ENCODE measurements at regions of chr7 and their contacts with region 1.

Region 1: DNA sequence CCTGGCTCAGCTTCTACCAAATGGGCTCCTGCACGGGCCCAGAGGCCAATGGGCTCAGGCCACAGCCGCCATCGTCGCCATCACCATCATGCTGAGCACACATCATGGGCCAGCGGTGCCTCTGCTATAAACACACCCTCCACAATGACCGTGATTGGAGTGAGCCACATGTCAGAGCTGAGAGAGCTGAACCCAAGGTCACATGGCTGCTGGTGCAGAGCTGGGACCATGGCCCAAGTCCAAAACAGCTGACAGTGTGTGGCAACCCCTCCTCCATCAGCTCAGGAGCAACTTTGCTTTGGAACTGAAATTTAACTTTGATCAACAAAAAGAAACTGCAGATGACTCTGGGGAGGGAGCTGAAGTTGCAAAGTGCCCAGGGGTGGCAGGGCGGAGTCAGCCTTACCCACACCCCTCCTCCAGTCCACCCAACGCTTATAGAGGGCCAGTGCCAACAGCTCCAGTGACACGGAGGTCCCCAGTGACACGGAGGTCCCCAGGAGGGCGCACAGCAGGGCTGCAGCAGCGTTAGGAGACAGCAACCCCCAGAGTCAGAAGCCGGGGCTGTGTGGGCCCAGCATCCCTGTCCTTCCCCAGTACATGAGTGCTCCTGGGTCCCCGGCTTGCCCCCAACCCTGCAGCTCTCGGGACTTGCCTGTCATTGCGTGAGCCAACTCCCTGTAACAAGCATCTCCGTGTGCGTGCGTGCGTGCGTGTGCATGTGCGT is 249.6 kb downstream of the ELFN1 start:
- H3K4me3 Mint-ChIP-seq: peak overlapping the region; percentile 70
- H3K27ac Mint-ChIP-seq: peak overlapping the region; percentile 87
- H3K4me1 Mint-ChIP-seq: peaks cover 97% of the 10 kb centered on the region
- H3K27me3 Mint-ChIP-seq: no peaks in the 10 kb centered on the region

Region 2: DNA sequence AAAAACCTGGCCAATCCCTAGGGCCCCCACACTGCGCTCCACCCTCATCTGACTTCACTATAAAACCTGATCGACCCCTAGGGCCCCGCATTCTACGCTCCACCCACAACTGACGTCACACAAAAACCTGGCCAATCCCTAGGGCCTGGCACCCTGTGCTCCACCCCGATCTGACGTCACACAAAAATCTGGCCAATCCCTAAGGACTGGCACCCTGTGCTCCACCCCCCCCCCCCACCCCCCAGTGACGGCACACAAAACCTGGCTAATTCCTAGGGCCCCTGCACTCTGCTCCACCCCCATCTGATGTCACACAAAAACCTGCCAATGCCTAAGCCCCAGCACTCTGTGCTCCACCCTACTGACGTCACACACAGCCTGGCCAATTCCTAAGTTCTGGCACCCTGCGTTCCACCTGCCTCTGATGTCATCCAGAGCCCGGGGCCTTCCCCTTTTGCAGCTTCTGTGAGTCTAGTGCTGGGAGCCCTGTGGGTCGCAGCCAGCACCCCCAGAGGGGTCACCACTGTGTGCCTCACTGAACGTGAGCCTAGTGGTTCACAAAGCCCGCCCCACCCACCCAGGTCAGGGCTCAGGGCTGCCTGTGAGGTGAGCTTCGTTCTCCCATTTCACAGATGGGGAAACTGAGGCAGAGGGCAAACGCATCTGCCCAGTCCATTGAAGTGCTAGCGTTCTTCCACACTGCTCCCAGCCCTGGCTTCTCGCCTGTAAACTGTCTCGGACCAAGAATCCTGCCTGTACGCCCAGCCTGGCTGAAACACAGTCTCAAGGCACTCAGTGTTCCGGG is 501.0 kb before region 1 on chr7:
- intact Hi-C with region 1: no loop called
- H3K4me3 Mint-ChIP-seq: peak overlapping the region; percentile 22
- H3K27ac Mint-ChIP-seq: peak overlapping the region; percentile 67
- H3K4me1 Mint-ChIP-seq: peaks cover 23% of the 10 kb centered on the region
- H3K27me3 Mint-ChIP-seq: peaks cover 47% of the 10 kb centered on the region

Region 3: GRCh38 chr7:1940402-1940786 is 20.7 kb after region 1 on chr7:
- intact Hi-C with region 1: loop called (anchors 1 kb)
- H3K4me3 Mint-ChIP-seq: peak overlapping the region; percentile 84
- H3K27ac Mint-ChIP-seq: peak overlapping the region; percentile 98
- H3K4me1 Mint-ChIP-seq: peaks cover 76% of the 10 kb centered on the region
- H3K27me3 Mint-ChIP-seq: no peaks in the 10 kb centered on the region

Region 4: DNA sequence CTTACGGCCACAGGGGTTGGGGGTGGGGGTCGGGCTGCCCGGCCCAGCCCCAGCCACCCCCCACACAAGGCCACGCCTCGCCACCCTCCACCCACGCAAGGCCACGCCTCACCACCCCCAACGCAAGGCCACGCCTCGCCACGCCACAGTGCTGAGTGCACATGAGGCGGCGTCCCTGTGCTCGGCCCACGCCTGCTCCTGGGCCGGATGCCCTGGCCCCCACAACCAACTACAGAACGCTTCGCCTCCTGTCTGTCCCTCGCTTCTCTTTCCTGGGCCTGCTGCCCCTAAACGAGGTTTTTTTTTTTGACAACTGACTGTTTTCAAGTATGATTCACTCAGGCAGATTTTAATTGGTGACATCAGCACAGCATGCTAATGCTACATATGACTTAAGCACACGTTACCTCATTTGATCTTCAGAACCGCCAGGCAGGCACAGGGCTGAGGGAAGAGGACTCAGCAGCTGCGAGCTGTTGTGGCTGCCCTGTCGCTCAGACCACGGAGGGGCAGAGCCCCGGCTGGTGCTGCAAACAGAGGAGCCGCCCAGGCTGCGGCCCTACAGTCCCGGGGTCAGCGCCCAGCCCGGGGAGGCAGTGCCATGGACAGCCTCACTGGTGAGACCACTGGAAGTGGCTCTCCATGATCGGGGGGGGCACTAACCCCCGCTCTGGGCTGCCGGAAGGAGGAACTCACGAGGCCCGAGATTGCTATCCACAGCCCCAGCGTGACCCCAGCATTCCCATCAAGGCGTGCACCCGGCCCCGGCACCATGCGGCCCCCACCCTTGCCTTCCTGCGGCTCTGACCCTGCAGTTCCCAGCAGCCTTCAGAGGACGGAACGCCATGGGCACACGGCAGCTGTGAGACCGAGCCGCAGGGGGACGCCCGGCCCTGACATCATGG is 100.2 kb after region 1 on chr7:
- intact Hi-C with region 1: loop called (anchors 10 kb)
- H3K4me3 Mint-ChIP-seq: peak overlapping the region; percentile 61
- H3K27ac Mint-ChIP-seq: peak overlapping the region; percentile 100
- H3K4me1 Mint-ChIP-seq: peaks cover 81% of the 10 kb centered on the region
- H3K27me3 Mint-ChIP-seq: no peaks in the 10 kb centered on the region

Region 5: GRCh38 chr7:2123360-2123759 is 203.7 kb after region 1 on chr7:
- intact Hi-C with region 1: no loop called
- H3K4me3 Mint-ChIP-seq: no peak overlapping the region
- H3K27ac Mint-ChIP-seq: no peak overlapping the region
- H3K4me1 Mint-ChIP-seq: peaks cover 12% of the 10 kb centered on the region
- H3K27me3 Mint-ChIP-seq: no peaks in the 10 kb centered on the region